ENCODE measurements at regions of chr1 and their contacts with region 1.

Region 1: GRCh38 chr1:54488779-54489626 is 59.0 kb upstream of the ACOT11 start:
- DNase-seq: peak; percentile 71
- H3K4me3 Mint-ChIP-seq: peak overlapping the region; percentile 86
- H3K27ac Mint-ChIP-seq: peak overlapping the region; percentile 82
- H3K4me1 Mint-ChIP-seq: peaks cover 36% of the 10 kb centered on the region
- H3K27me3 Mint-ChIP-seq: peaks cover 35% of the 10 kb centered on the region

Region 2: GRCh38 chr1:53860967-53861411 is 628.0 kb before region 1 on chr1:
- intact Hi-C with region 1: loop called (anchors 1 kb)
- DNase-seq: peak; percentile 18
- H3K4me3 Mint-ChIP-seq: no peak overlapping the region
- H3K27ac Mint-ChIP-seq: no peak overlapping the region
- H3K4me1 Mint-ChIP-seq: no peaks in the 10 kb centered on the region
- H3K27me3 Mint-ChIP-seq: no peaks in the 10 kb centered on the region

Region 3: GRCh38 chr1:54167422-54168139 is 321.4 kb before region 1 on chr1:
- intact Hi-C with region 1: no loop called
- DNase-seq: no peak
- H3K4me3 Mint-ChIP-seq: no peak overlapping the region
- H3K27ac Mint-ChIP-seq: no peak overlapping the region
- H3K4me1 Mint-ChIP-seq: peaks cover 13% of the 10 kb centered on the region
- H3K27me3 Mint-ChIP-seq: peaks cover 1% of the 10 kb centered on the region

Region 4: GRCh38 chr1:54180701-54181360 is 308.2 kb before region 1 on chr1:
- intact Hi-C with region 1: loop called (anchors 1 kb)
- DNase-seq: no peak
- H3K4me3 Mint-ChIP-seq: no peak overlapping the region
- H3K27ac Mint-ChIP-seq: no peak overlapping the region
- H3K4me1 Mint-ChIP-seq: no peaks in the 10 kb centered on the region
- H3K27me3 Mint-ChIP-seq: no peaks in the 10 kb centered on the region

Region 5: GRCh38 chr1:54277451-54278341 is 211.3 kb before region 1 on chr1:
- intact Hi-C with region 1: loop called (anchors 2 kb)
- DNase-seq: no peak
- H3K4me3 Mint-ChIP-seq: peak overlapping the region; percentile 72
- H3K27ac Mint-ChIP-seq: peak overlapping the region; percentile 95
- H3K4me1 Mint-ChIP-seq: peaks cover 65% of the 10 kb centered on the region
- H3K27me3 Mint-ChIP-seq: no peaks in the 10 kb centered on the region

Region 6: GRCh38 chr1:54406339-54407153 is 82.5 kb before region 1 on chr1 and contains the start of gene SSBP3:
- intact Hi-C with region 1: loop called (anchors 1 kb)
- DNase-seq: peak; percentile 91
- H3K4me3 Mint-ChIP-seq: peak within 1 kb of the TSS; percentile 88
- H3K27ac Mint-ChIP-seq: peak within 1 kb of the TSS; percentile 83
- H3K4me1 Mint-ChIP-seq: peaks cover 72% of the 10 kb centered on the region
- H3K27me3 Mint-ChIP-seq: no peaks in the 10 kb centered on the region
- total RNA-seq, gene SSBP3: 98.0 and 110 TPM in 2 replicates

Measured in activated T-helper 1 cell treated with anti-CD3 and anti-CD28 coated beads, Interleukin-12 subunit alpha, Interleukin-12 subunit beta, Interleukin-2, Interleukin-4 antibody, amounts not matched to agents 30 ng/mL and 10 ng/mL and 1 ng/mL, durations not matched to agents 14 hours and 24 hours and 36 hours (primary cell).